ENCODE measurements at regions of chr18 and their contacts with region 1.

Region 1: GRCh38 chr18:3012964-3013804 is at the start of gene LPIN2:
- DNase-seq: peak; percentile 99 to 100 (median 100)
- H3K4me3 ChIP-seq: peak within 1 kb of the TSS; percentile 79
- H3K27ac ChIP-seq: peak within 1 kb of the TSS; percentile 90 to 98
- H3K4me1 ChIP-seq: peaks cover 9% of the 10 kb centered on the region
- H3K27me3 ChIP-seq: no peaks in the 10 kb centered on the region
- CTCF ChIP-seq: no peak
- EP300 ChIP-seq: no peak
- POLR2A ChIP-seq: peak; percentile 51
- total RNA-seq, gene LPIN2: 21.3 to 30.4 (median 26.4) TPM

Region 2: GRCh38 chr18:2618009-2618408 is 395.2 kb before region 1 on chr18:
- intact Hi-C with region 1: no loop called
- DNase-seq: no peak
- H3K4me3 ChIP-seq: no peak overlapping the region
- H3K27ac ChIP-seq: no peak overlapping the region
- H3K4me1 ChIP-seq: no peaks in the 10 kb centered on the region
- H3K27me3 ChIP-seq: no peaks in the 10 kb centered on the region
- CTCF ChIP-seq: no peak
- EP300 ChIP-seq: no peak
- POLR2A ChIP-seq: no peak

Region 3: GRCh38 chr18:2655178-2655953 is 357.8 kb before region 1 on chr18 and contains the start of gene SMCHD1:
- intact Hi-C with region 1: loop called in 1 of 4 experiments (anchors 5 kb)
- DNase-seq: peak; percentile 81 to 90 (median 87)
- H3K4me3 ChIP-seq: peak within 1 kb of the TSS; percentile 96
- H3K27ac ChIP-seq: peak within 1 kb of the TSS; percentile 98 to 99
- H3K4me1 ChIP-seq: peaks cover 7% of the 10 kb centered on the region
- H3K27me3 ChIP-seq: no peaks in the 10 kb centered on the region
- CTCF ChIP-seq: no peak
- EP300 ChIP-seq: no peak
- POLR2A ChIP-seq: peak; percentile 85
- total RNA-seq, gene SMCHD1: 43.4 to 82.7 (median 58.1) TPM

Region 4: GRCh38 chr18:2716394-2717326 is 296.5 kb before region 1 on chr18:
- intact Hi-C with region 1: no loop called
- DNase-seq: no peak
- H3K4me3 ChIP-seq: no peak overlapping the region
- H3K27ac ChIP-seq: no peak overlapping the region
- H3K4me1 ChIP-seq: peaks cover 7% of the 10 kb centered on the region
- H3K27me3 ChIP-seq: no peaks in the 10 kb centered on the region
- CTCF ChIP-seq: no peak
- EP300 ChIP-seq: no peak
- POLR2A ChIP-seq: no peak

Region 5: GRCh38 chr18:2920546-2921343 is 92.4 kb before region 1 on chr18:
- intact Hi-C with region 1: no loop called
- DNase-seq: no peak
- H3K4me3 ChIP-seq: no peak overlapping the region
- H3K27ac ChIP-seq: no peak overlapping the region
- H3K4me1 ChIP-seq: peaks cover 7% of the 10 kb centered on the region
- H3K27me3 ChIP-seq: no peaks in the 10 kb centered on the region
- CTCF ChIP-seq: no peak
- EP300 ChIP-seq: no peak
- POLR2A ChIP-seq: no peak

Region 6: DNA sequence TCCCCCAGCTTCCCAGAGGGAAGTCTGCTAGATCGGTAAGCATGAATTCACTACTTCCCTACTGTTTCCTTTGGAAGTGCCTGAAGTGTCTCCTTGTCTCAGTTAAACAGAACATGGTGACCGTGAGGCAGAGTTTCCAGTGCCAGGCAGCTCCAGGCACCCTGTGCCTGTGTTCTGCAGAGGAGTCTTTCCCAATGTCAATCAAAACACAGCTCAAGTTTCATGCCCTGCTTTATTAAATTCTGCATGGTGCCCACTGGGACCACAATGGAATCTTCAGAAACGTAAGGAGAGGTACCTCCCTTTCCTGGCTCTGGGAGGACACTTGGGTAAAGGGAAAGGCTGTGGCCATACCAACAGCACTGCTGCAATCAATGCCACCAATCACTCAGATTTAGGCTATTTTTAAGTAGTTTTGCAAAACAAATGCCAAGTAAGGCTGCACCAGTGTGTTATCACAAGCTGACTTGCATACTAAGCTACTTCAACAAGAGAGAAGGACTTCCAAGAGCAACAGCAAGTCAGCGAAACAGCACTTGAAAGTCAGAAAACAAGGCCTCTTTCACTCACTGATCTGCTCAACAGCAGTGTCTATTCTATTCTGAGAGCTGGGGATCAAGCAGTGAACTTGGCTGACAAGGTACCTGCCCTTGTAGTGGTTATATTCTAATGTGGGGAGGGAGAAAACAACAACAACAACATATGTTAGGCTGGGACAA is 15.2 kb before region 1 on chr18:
- intact Hi-C with region 1: loop called in 1 of 4 experiments (anchors 2 kb)
- DNase-seq: no peak
- H3K4me3 ChIP-seq: no peak overlapping the region
- H3K27ac ChIP-seq: peak overlapping the region in 1 of 2 donors; percentile 31
- H3K4me1 ChIP-seq: peaks cover 10% of the 10 kb centered on the region
- H3K27me3 ChIP-seq: no peaks in the 10 kb centered on the region
- CTCF ChIP-seq: no peak
- EP300 ChIP-seq: no peak
- POLR2A ChIP-seq: no peak

Region 7: GRCh38 chr18:4369705-4370104 is 1356.5 kb after region 1 on chr18:
- intact Hi-C with region 1: no loop called
- DNase-seq: no peak
- H3K4me3 ChIP-seq: no peak overlapping the region
- H3K27ac ChIP-seq: no peak overlapping the region
- H3K4me1 ChIP-seq: no peaks in the 10 kb centered on the region
- H3K27me3 ChIP-seq: no peaks in the 10 kb centered on the region
- CTCF ChIP-seq: no peak
- EP300 ChIP-seq: no peak
- POLR2A ChIP-seq: no peak